ENCODE measurements at regions of chr15 and their contacts with region 1.

Region 1: GRCh38 chr15:88073391-88073691 is 183.2 kb downstream of the NTRK3 start:
- DNase-seq: no peak
- H3K4me3 ChIP-seq: no peak overlapping the region
- H3K27ac ChIP-seq: no peak overlapping the region
- H3K4me1 ChIP-seq: no peaks in the 10 kb centered on the region
- H3K27me3 ChIP-seq: no peaks in the 10 kb centered on the region
- CTCF ChIP-seq: no peak
- POLR2A ChIP-seq: no peak

Region 2: GRCh38 chr15:88106074-88106473 is 32.7 kb after region 1 on chr15:
- intact Hi-C with region 1: no loop called
- DNase-seq: no peak
- H3K4me3 ChIP-seq: no peak overlapping the region
- H3K27ac ChIP-seq: peak overlapping the region in 1 of 2 donors; percentile 43
- H3K4me1 ChIP-seq: no peaks in the 10 kb centered on the region
- H3K27me3 ChIP-seq: no peaks in the 10 kb centered on the region
- CTCF ChIP-seq: no peak
- POLR2A ChIP-seq: no peak

Region 3: GRCh38 chr15:88220443-88221335 is 147.3 kb after region 1 on chr15:
- intact Hi-C with region 1: loop called (anchors 5 kb)
- DNase-seq: no peak
- H3K4me3 ChIP-seq: no peak overlapping the region
- H3K27ac ChIP-seq: no peak overlapping the region
- H3K4me1 ChIP-seq: no peaks in the 10 kb centered on the region
- H3K27me3 ChIP-seq: no peaks in the 10 kb centered on the region
- CTCF ChIP-seq: no peak
- POLR2A ChIP-seq: no peak

Measured in breast epithelium (tissue), 4 donors.